ENCODE measurements at regions of chr4 and their contacts with region 1.

Region 1: GRCh38 chr4:148152871-148153625 is 289.2 kb downstream of the NR3C2 start:
- DNase-seq: no peak
- H3K4me3 Mint-ChIP-seq: no peak overlapping the region
- H3K27ac Mint-ChIP-seq: no peak overlapping the region
- H3K4me1 Mint-ChIP-seq: no peaks in the 10 kb centered on the region
- H3K27me3 Mint-ChIP-seq: peaks cover 2% of the 10 kb centered on the region

Region 2: DNA sequence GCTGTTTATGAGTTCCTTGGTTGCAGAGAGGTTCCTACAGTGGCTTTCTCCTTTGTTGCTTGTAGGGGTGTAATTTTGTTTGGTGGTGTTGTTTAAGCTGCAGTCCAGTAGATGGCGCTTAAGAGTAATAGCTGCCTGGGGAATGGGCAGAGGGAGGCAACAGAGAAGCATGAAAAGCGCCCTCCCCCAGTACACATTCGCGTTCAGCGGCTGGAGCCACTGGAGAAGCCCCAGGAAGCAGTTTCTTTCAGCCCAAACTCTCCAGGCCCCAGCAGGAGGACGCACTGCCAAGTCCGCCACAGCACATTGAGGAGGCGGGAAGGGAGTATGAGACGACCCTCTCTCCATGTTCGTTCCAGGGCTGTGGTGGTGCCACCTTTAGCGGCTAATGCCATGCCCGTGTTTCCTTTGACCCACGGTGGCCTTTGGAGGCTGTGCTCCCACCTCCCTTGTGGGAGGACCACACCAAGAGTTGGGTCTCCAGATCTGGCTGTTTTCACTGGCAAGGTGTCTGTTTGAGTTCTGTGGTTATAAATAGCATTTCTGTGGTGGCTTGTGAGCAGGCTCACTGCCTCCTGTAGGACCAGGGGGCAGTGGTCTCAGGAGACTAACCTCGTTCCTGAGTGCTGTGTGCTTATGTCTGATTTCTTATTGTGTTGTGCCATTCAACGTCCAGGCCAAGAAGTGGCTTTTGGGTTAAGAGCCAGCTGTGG is 168.8 kb before region 1 on chr4:
- intact Hi-C with region 1: loop called (anchors 1 kb)
- DNase-seq: peak; percentile 8
- H3K4me3 Mint-ChIP-seq: no peak overlapping the region
- H3K27ac Mint-ChIP-seq: no peak overlapping the region
- H3K4me1 Mint-ChIP-seq: peaks cover 16% of the 10 kb centered on the region
- H3K27me3 Mint-ChIP-seq: peaks cover 5% of the 10 kb centered on the region

Region 3: GRCh38 chr4:148273501-148273986 is 120.5 kb after region 1 on chr4:
- intact Hi-C with region 1: no loop called
- DNase-seq: no peak
- H3K4me3 Mint-ChIP-seq: no peak overlapping the region
- H3K27ac Mint-ChIP-seq: no peak overlapping the region
- H3K4me1 Mint-ChIP-seq: no peaks in the 10 kb centered on the region
- H3K27me3 Mint-ChIP-seq: no peaks in the 10 kb centered on the region

Measured in activated T-helper 1 cell treated with anti-CD3 and anti-CD28 coated beads, Interleukin-12 subunit alpha, Interleukin-12 subunit beta, Interleukin-2, Interleukin-4 antibody, amounts not matched to agents 30 ng/mL and 10 ng/mL and 1 ng/mL, durations not matched to agents 14 hours and 24 hours and 36 hours (primary cell).